Endothelial cell of umbilical vein (primary cell): ENCODE measurements at regions of chr10 and their contacts with region 1.

Region 1: GRCh38 chr10:88042160-88043100 is 179.0 kb downstream of the PTEN start:
- DNase-seq: no peak
- H3K4me3 ChIP-seq: no peak overlapping the region
- H3K27ac ChIP-seq: no peak overlapping the region
- H3K4me1 ChIP-seq: no peaks in the 10 kb centered on the region
- H3K27me3 ChIP-seq: no peaks in the 10 kb centered on the region
- CTCF ChIP-seq: no peak
- POLR2A ChIP-seq: no peak

Region 2: DNA sequence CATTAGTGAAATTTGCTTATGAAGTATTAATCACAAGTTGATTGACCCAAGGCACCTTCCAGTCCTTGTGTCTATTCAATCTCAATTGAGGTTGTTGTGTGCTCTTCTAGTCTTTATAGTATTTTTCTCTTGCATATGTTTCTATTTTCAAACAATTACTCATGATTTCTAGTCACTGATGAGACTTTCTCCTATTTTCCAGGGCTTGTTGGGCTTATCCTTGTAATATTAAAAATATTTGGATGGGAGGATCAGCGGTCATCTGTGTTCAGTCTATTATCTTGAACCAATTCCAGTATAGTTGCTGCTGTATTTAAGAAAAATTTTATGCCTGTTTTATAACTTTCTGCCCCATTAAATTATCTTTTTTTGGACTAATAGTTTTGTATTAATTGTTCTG is 24.6 kb before region 1 on chr10:
- CTCF ChIA-PET with region 1: no interaction called
- POLR2A ChIA-PET with region 1: no interaction called
- dilution Hi-C with region 1: no loop called
- intact Hi-C with region 1: loop called (anchors 2 kb)
- DNase-seq: no peak
- H3K4me3 ChIP-seq: no peak overlapping the region
- H3K27ac ChIP-seq: no peak overlapping the region
- H3K4me1 ChIP-seq: no peaks in the 10 kb centered on the region
- H3K27me3 ChIP-seq: no peaks in the 10 kb centered on the region
- CTCF ChIP-seq: no peak
- POLR2A ChIP-seq: no peak

Region 3: DNA sequence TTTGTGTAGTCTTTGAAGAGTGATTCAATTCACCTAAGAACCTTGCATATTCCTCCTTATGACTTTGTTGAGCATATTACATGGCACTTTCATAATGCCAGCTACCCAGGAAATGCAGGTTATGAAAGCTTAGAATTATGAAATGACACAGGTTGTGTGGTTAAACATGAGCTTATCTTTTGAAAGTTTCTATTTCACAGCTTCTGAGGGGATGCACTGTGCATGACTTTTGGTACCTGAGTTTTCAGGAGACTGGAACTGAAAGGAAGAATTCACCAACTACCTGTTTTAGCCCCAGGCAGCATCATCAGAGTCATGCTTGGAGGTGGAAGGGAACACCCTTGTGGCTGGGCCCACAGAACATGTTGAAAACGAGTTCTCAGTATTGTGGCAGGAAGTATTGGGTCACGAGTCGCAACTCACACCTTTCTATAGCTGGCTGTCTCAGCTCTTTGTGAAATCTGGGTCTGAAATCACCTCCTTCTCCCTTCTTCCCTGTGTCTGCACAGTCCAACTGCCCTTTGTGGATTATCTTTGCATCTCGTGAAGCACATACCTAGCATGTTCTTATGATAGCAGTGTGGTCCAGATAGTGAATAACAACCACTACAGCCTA is 49.2 kb after region 1 on chr10:
- CTCF ChIA-PET with region 1: no interaction called
- POLR2A ChIA-PET with region 1: no interaction called
- dilution Hi-C with region 1: no loop called
- intact Hi-C with region 1: no loop called
- DNase-seq: no peak
- H3K4me3 ChIP-seq: no peak overlapping the region
- H3K27ac ChIP-seq: no peak overlapping the region
- H3K4me1 ChIP-seq: no peaks in the 10 kb centered on the region
- H3K27me3 ChIP-seq: peaks cover 0 to 4% of the 10 kb centered on the region in 2 experiments
- CTCF ChIP-seq: no peak
- POLR2A ChIP-seq: no peak

Region 4: GRCh38 chr10:88401671-88402347 is 359.4 kb after region 1 on chr10:
- CTCF ChIA-PET with region 1: no interaction called
- POLR2A ChIA-PET with region 1: no interaction called
- dilution Hi-C with region 1: no loop called
- intact Hi-C with region 1: no loop called
- DNase-seq: peak; percentile 16
- H3K4me3 ChIP-seq: no peak overlapping the region
- H3K27ac ChIP-seq: no peak overlapping the region
- H3K4me1 ChIP-seq: no peaks in the 10 kb centered on the region
- H3K27me3 ChIP-seq: no peaks in the 10 kb centered on the region
- CTCF ChIP-seq: peak in 1 of 2 donors; percentile 17
- POLR2A ChIP-seq: no peak